ENCODE measurements at regions of chr4 and their contacts with region 1.

Region 1: DNA sequence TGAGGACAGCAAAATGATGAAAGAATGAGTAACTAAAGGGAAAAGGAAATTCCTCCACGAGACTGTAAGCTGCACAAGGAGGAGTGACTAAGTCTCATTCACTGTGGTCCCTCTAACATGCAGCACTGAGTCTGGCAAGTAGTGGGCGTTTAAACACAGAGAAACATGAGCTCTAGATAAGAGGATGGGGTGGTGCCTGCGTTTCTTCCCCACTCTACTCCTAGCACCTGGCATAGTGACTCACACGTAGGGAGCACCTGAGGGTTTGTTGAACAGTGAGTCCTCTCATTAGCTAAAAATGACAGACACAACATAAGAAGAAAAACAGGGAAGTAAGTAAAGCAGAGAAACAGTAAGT is 105.8 kb upstream of the CBR4 start:
- DNase-seq: peak in 37 of 42 donors; percentile 9 to 91 (median 61)

Region 2: GRCh38 chr4:169254546-169254983 is 138.7 kb after region 1 on chr4:
- intact Hi-C with region 1: loop called (anchors 10 kb)
- DNase-seq: no peak

Measured in head of caudate nucleus (tissue), 42 donors.